AG04449 (cell line): ENCODE measurements at regions of chr2 and their contacts with region 1.

Region 1: GRCh38 chr2:75466708-75467311 is 93.9 kb downstream of the EVA1A start:
- DNase-seq: no peak
- H3K4me3 ChIP-seq: no peak overlapping the region
- CTCF ChIP-seq: peak; percentile 44

Region 2: DNA sequence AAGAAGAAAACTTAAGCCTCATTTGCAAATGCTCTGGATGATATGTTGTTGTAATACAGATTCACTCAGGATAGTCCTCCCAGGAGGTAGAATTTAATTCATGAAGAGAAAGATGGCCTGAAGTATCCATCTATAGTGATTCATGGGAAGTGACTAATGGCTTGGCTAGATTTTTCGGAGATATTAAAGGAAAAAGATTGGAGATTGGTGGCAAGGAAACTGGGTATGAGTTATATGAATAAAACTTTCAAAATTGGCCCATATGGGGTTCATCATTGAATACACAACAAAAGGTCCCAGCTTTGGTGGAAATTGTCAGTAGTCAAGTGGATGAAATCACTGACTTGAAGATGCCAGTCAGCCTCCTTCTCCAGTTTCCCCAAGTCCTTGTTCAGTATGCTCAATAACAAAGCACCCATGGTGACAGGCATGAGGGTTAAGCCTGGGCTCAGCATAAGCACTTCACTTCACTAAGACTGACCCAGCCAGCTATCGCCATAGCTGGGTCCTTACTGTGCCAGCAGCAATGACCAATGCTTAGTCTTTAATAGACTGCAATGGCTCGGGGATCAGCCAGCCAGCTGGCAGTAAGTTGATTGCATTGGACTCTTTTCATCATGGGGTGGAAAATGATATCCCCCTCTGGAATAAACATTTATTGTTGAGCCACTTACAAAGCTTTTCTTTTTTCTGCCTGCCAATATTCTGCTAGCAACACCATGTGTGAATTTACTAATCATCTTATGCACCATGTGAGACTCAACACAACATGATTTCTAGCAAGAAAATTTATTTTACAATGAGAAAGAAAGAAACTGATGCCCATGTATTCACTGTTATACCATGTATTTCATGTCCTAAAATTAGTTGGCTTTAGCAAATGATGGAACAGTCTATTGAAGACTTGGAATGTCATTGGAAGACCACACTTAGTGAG is 90.9 kb before region 1 on chr2:
- CTCF ChIA-PET with region 1: no interaction called
- POLR2A ChIA-PET with region 1: no interaction called
- DNase-seq: no peak
- H3K4me3 ChIP-seq: no peak overlapping the region
- CTCF ChIP-seq: no peak

Region 3: GRCh38 chr2:75480971-75481836 is 14.4 kb after region 1 on chr2:
- CTCF ChIA-PET with region 1: interaction called, 166 read pairs
- POLR2A ChIA-PET with region 1: no interaction called
- DNase-seq: no peak
- H3K4me3 ChIP-seq: no peak overlapping the region
- CTCF ChIP-seq: peak; percentile 35

Region 4: DNA sequence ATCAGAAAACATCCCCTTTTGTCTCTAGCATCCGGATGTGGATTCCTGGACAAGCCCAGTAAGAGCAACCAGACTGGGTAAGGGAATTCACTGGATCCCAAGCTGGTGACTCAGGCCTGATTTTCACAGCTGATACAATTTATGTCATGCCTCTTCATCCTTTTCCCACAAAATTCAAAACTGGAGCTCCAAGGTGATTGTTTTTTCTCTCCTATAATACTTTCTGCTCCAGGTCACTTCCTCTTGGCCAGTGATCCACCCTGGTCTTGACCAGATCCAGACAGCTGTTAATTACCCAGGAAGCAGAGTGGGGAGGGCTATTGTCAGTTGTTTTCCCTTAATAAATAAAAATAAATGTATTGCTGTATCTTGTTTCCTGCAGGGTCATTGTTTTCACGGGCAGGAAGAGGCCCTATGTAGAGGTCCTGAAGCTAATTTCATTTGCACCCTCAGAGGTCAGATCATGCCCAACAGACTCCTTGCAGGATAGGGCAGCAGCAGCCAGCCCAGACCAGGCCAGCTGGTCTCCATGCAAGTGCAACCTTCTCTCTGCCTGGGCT is 36.3 kb after region 1 on chr2:
- CTCF ChIA-PET with region 1: interaction called, 19 read pairs
- POLR2A ChIA-PET with region 1: no interaction called
- DNase-seq: peak; percentile 66
- H3K4me3 ChIP-seq: no peak overlapping the region
- CTCF ChIP-seq: no peak

Region 5: GRCh38 chr2:75592028-75592427 is 125.2 kb after region 1 on chr2:
- CTCF ChIA-PET with region 1: interaction called, 12 read pairs
- POLR2A ChIA-PET with region 1: no interaction called
- DNase-seq: no peak
- H3K4me3 ChIP-seq: no peak overlapping the region
- CTCF ChIP-seq: no peak

Region 6: DNA sequence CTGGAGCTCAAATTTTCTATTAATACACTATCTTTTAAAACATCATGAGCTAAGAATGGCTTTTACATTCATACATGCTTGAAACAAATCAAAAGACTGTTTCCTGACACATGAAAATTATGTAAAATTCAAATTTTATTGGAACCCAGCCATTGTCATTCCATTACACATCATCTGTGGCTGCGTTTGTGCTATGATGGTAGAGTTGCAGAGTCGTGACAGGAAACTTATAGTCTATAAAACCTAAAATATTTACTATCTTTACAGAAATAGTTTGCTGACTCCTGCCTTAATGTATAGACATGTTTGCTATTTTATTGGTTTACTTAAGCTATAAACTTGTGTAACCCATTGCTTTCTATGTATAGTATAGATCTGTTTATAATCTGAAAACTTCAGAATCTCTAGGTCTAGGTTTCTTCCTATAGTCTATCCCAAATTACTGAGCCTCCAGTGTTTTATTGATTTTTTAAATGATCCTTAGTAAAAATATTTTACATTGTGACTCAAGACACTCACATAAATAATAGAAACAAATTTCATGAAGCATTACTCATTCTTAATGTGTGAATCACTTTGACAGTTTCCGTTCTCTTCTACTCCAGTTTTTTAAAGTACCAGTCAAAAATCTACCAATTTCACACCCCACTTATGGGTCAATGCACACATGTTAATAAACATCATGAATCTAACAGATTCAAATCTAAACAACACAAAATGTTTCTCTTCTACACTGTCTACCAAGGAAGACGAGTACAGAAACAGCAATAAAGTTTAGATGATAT is 153.3 kb after region 1 on chr2:
- CTCF ChIA-PET with region 1: interaction called, 171 read pairs
- POLR2A ChIA-PET with region 1: no interaction called
- DNase-seq: no peak
- H3K4me3 ChIP-seq: no peak overlapping the region
- CTCF ChIP-seq: no peak

Region 7: GRCh38 chr2:75646583-75647425 is 180.0 kb after region 1 on chr2 and contains the start of gene MRPL19:
- CTCF ChIA-PET with region 1: interaction called, 452 read pairs
- POLR2A ChIA-PET with region 1: no interaction called
- DNase-seq: peak; percentile 60
- H3K4me3 ChIP-seq: peak within 1 kb of the TSS; percentile 95
- CTCF ChIP-seq: no peak

Region 8: DNA sequence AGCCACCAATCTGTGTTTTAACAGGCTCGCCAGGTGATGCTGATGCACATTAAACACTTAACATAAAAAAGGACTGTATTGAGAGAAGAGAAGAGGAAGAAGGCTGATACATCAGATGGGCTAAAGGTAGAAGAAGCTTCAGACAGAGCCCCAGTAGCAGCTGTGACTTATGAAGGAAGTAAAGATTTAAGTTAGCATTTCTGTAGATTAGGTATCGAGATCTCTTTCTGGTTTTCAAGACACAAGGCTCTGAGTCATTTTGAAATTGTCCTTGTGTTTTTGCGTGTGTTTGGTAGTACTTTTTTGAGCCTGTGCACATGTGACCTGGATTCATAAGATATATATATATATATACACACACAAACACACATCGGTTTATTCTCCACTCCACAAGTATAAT is 284.6 kb after region 1 on chr2:
- CTCF ChIA-PET with region 1: no interaction called
- POLR2A ChIA-PET with region 1: no interaction called
- DNase-seq: no peak
- H3K4me3 ChIP-seq: no peak overlapping the region
- CTCF ChIP-seq: no peak

Region 9: GRCh38 chr2:75894170-75894569 is 427.4 kb after region 1 on chr2:
- CTCF ChIA-PET with region 1: no interaction called
- POLR2A ChIA-PET with region 1: no interaction called
- DNase-seq: no peak
- H3K4me3 ChIP-seq: no peak overlapping the region
- CTCF ChIP-seq: no peak